GM18951 (cell line): ENCODE measurements at regions of chr10 and their contacts with region 1.

Region 1: DNA sequence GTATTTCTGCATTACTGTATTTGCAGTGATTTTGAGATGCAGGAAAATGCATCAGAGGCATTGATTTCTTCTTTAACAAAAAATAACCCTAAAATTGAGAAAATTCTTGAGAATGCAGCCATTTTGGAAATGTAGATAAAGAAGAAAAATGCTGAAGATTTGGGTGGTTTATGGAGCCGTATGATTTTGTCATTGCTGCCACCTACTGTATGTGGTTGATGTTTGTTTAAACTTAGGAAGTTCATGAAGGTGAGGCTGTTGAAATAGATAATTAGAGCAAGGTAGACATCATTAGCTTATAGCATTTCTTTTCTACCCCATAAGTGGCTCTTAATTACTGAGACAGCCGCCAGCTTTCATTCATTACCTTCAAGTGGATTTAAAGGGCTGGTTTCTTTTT is 92.1 kb upstream of the SAMD8 start:
- POLR2A ChIP-seq: no peak

Region 2: GRCh38 chr10:74078037-74078436 is 941.3 kb before region 1 on chr10:
- in situ Hi-C with region 1: no loop called
- POLR2A ChIP-seq: no peak

Region 3: DNA sequence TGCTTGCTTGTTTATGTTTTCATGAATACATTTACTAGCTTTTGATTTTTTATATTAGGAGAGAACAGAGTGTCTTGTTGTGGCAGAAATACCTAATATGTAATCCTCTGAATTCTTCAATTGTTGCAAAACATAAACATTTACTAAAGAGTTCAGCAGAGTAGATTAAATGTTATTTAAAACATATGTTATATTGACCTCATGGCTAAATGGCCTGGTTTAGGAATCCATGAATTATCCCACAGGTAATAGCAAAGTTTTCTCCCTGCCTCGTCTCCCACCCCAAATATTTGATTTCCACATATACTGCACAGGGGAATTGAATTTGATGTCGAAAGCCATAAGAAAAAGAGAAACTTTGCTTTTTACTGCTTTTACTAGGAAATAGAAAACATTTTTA is 756.5 kb before region 1 on chr10:
- in situ Hi-C with region 1: loop called (anchors 5 kb)
- POLR2A ChIP-seq: no peak

Region 4: DNA sequence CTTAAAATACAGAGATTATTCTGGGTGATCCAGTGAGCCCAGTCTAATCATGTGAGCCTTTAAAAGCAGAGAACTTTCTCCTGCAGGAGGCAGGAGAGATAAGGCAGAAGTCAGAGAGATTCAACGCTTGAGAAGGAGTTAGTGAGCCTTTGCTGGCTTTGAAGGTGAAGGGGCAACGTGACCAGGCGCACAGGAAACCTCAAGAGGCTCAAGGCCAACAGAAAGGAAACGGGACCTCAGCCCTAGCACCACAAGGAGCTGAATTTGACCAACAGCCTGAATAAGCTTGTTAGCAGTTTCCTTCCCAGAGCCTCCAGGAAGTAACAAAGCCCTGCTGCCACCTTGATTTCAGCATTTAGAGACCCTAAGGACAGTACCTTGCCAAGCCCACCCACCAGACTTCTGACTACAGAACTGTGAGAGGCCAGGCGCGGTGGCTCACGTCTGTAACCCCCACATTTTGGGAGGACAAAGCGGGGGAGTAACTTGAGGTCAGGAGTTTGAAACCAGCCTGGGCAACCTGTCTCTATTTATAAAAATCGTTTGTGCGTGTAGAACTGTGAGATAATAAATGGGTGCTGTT is 280.3 kb before region 1 on chr10:
- in situ Hi-C with region 1: loop called (anchors 25 kb)
- POLR2A ChIP-seq: no peak